ENCODE measurements at regions of chr11 and their contacts with region 1.

Region 1: GRCh38 chr11:9460322-9461067 is at the start of gene ZNF143:
- DNase-seq: peak; percentile 100
- H3K4me3 ChIP-seq: peak within 1 kb of the TSS; percentile 97
- H3K27ac ChIP-seq: peak within 1 kb of the TSS; percentile 99
- H3K27me3 ChIP-seq: no peaks in the 10 kb centered on the region
- CTCF ChIP-seq: no peak
- polyA plus RNA-seq, gene ZNF143: 29.1 and 29.4 TPM in 2 replicates

Region 2: DNA sequence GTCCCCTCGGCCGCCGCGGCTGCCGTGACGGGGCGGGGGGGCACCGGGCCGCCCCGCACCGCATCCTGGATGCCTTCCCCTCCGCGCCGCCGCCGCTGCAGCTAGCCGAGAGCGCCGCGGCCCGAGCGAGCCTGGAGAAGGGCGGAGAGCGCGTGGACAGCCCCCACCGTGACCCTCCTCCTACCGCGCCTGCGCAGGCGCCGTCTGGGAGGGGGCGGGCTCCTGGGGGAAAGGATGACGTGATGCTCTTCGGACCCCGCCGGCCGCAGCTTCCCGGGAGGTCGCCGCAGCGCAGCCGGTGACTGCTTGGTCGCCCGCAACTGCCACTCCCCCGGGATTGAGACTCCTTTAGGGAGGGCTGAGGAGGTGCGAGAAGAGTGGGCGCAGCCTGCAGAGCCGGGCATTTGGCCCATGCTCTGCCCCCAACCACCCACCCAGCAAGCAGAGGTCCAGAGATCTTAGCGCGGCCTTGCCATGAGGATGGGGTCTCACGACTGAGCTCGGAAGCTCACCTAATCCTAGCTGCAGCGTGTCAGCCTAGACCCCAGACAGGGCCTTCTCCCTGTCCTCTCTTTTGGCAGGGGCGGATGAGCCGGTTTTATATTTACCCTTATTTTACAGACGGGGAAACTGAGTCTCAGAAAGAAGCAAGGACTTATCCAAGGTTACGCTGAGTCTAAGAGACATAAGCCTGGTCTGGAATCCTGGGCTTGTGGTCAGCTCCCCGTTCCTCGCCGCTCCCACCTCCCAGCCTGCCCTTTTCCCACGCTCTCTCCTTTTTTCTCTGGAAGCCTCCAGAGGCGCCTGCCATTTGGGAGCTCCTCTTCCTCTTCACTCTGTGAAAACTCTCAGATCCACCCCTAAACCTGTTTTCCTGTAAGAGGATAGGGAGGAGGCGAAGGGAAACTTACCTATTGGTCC is 195.0 kb before region 1 on chr11 and contains the start of gene DENND5A:
- CTCF ChIA-PET with region 1: no interaction called
- POLR2A ChIA-PET with region 1: interaction called, 20 read pairs
- DNase-seq: peak; percentile 51
- H3K4me3 ChIP-seq: peak within 1 kb of the TSS; percentile 86
- H3K27ac ChIP-seq: peak within 1 kb of the TSS; percentile 89
- H3K27me3 ChIP-seq: no peaks in the 10 kb centered on the region
- CTCF ChIP-seq: no peak
- polyA plus RNA-seq, gene DENND5A: 145 and 175 TPM in 2 replicates

Region 3: DNA sequence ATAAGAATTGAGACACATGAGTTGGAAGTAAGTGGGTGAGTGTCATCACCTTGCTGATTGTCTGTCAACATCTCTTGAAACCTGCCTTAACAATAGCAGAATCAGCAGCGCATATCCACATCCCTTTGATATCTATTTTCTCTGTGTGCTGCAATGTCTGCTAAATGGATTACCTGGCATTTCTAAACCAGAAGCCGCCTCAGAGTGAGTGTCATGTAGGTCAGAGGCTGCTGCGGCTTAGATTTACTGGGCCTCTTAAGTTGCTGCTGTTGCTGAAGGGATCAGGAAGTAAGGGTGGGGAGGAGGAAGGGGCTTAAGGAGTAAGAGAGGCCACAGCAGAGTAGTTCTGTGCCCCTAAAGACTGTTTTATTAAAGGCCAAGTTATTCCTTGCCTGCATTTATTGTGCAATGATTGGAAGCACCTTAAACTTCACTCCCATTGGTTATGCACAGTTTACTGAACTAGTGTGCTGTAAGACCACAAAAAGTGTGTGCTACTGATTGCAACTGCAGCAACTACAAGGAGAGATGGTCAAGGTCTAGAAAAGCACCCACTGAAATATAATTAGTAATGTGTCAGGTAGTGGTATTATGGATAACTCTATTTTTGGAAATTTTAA is 116.3 kb before region 1 on chr11:
- CTCF ChIA-PET with region 1: no interaction called
- POLR2A ChIA-PET with region 1: no interaction called
- DNase-seq: no peak
- H3K4me3 ChIP-seq: no peak overlapping the region
- H3K27ac ChIP-seq: no peak overlapping the region
- H3K27me3 ChIP-seq: peaks cover 2% of the 10 kb centered on the region
- CTCF ChIP-seq: no peak

Region 4: GRCh38 chr11:9384535-9385303 is 75.8 kb before region 1 on chr11 and contains the start of gene IPO7:
- CTCF ChIA-PET with region 1: no interaction called
- POLR2A ChIA-PET with region 1: interaction called, 18 read pairs
- DNase-seq: peak; percentile 68
- H3K4me3 ChIP-seq: peak within 1 kb of the TSS; percentile 93
- H3K27ac ChIP-seq: peak within 1 kb of the TSS; percentile 89
- H3K27me3 ChIP-seq: no peaks in the 10 kb centered on the region
- CTCF ChIP-seq: peak; percentile 49
- polyA plus RNA-seq, gene IPO7: 66.9 and 80.6 TPM in 2 replicates

Region 5: GRCh38 chr11:9489080-9489765 is 28.7 kb after region 1 on chr11:
- CTCF ChIA-PET with region 1: no interaction called
- POLR2A ChIA-PET with region 1: interaction called, 27 read pairs
- DNase-seq: peak; percentile 23
- H3K4me3 ChIP-seq: peak overlapping the region; percentile 20
- H3K27ac ChIP-seq: peak overlapping the region; percentile 63
- H3K27me3 ChIP-seq: no peaks in the 10 kb centered on the region
- CTCF ChIP-seq: no peak

Region 6: DNA sequence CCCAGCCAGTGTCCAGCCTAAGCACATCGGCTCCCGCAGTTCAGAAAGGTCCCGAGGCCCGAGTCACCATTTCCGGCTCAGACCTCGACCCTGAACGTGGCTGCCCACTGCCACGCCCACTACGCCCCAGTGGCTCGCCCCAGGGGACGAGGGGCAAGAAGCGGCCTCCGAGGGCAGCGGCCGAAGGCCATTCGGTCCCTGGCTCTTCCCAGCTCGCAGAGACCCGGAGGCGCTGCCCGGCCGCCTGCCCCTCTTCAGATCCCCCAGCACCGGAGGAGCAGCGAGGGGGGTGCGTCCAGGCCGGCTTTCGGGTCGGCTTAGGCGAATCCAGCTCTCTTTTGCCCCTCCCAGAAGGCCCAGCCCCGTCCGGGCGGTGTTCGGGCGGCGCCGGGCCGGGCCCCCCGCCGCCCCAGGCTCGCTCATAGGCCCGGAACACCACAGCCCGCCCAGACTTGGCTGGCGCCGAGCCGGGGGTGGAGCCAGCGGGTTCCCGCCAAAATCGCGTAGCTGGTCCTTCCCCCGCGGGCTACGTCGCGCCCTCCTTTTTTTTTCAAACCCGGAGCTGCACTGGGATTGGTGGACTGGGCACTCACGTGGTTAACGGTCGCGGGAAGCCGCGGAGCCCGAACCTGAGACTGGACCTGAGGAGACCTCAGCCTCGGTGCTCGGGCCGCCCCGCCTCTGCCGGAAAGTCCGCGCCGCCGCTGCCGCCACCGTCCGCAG is 112.7 kb after region 1 on chr11 and contains the start of gene WEE1:
- CTCF ChIA-PET with region 1: no interaction called
- POLR2A ChIA-PET with region 1: interaction called, 21 read pairs
- DNase-seq: peak; percentile 95
- H3K4me3 ChIP-seq: peak within 1 kb of the TSS; percentile 82
- H3K27ac ChIP-seq: peak within 1 kb of the TSS; percentile 97
- H3K27me3 ChIP-seq: no peaks in the 10 kb centered on the region
- CTCF ChIP-seq: no peak
- polyA plus RNA-seq, gene WEE1: 27.2 and 44.8 TPM in 2 replicates

Measured in AG04450 (cell line).